Sigmoid colon (tissue), 7 donors: ENCODE measurements at regions of chr19 and their contacts with region 1.

Region 1: GRCh38 chr19:10251792-10252694 is at the start of gene MRPL4:
- DNase-seq: peak; percentile 98
- H3K4me3 ChIP-seq: peak within 1 kb of the TSS; percentile 83 to 91 (median 85)
- H3K27ac ChIP-seq: peak within 1 kb of the TSS; percentile 82 to 92 (median 87)
- H3K4me1 ChIP-seq: peaks cover 0 to 27% (median 17%) of the 10 kb centered on the region in 4 donors
- H3K27me3 ChIP-seq: no peaks in the 10 kb centered on the region
- CTCF ChIP-seq: no peak
- EP300 ChIP-seq: no peak
- POLR2A ChIP-seq: peak in 1 of 2 donors; percentile 48
- total RNA-seq, gene MRPL4: 37.9 to 68.9 (median 62.8) TPM

Region 2: DNA sequence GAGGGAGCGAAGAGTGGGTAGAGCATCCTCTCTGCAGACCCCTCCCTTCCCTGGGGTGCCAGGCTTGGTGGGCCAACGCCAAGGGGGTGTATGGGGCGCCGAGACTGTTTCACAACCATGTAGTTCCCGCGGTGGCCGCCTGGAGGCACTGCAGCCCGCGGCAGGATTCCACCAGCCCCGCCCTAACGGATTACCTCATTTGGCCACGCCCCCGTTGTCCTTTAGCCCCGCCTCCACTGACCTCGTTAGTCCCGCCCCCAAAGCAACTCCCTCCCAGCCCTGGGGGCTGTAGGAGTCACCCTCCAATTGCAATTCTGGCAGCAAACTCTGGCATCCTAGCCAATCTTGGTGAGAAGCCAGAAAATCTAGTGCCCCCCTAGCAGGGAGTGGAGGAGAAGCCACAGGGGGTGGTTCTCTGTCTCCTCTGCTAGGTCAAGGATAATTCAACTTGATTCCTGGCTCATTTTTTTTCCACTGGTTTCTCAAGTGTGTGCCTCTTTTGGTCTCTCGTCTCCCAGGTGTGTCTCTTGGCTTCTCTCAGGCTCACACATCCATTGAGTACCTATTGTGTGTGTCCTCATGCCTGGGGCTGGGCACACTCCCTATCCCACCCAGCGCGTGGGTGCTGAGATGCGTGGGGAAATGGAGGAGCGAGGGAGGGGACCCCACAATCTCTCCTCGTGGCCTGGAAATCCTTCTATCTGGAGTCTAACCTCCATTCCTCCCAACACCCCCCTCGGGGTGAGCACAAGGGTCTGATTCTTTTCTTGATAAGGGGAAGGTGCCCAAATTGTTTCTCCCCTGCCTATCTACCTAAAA is 317.7 kb before region 1 on chr19:
- intact Hi-C with region 1: loop called (anchors 2 kb)
- DNase-seq: peak; percentile 80
- H3K4me3 ChIP-seq: no peak overlapping the region
- H3K27ac ChIP-seq: no peak overlapping the region
- H3K4me1 ChIP-seq: peaks cover 0 to 36% (median 20%) of the 10 kb centered on the region in 4 donors
- H3K27me3 ChIP-seq: peaks cover 29 to 63% (median 42%) of the 10 kb centered on the region in 3 donors
- CTCF ChIP-seq: peak; percentile 69 to 80 (median 73)
- EP300 ChIP-seq: no peak
- POLR2A ChIP-seq: no peak

Region 3: DNA sequence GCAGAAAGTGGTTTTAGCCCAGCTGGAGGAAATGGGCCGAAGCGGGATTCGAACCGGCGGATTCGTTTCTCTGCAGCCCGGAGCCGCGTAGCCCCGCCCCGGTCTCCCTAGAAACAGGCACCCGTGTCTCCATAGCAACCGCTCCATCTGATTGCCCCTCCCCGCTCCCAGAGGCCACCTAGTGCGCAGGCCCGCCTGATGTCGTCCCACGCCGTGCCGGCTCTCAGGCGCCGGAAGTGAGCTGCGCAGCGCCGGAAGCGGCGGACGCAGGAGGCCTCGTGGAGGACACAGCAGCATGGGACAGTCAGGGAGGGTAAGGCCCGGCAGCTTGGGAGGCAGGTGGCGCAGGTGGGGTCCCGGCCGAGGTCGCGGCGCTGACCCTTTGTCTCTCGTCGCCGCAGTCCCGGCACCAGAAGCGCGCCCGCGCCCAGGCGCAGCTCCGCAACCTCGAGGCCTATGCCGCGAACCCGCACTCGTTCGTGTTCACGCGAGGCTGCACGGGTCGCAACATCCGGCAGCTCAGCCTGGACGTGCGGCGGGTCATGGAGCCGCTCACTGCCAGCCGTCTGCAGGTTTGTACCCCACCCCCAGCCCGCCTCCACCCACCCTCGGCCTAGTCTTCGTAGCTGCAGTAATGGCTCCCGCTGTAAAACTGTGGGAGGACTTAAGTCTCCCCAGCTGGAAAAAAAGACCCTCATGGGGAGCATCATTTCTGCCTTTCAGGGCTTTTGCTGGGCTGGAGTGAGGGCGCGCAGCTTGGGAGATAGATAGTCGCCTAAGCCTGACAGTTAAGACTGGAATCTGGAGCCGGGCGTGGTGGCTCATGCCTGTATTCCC is 145.7 kb before region 1 on chr19 and contains the start of gene PPAN:
- intact Hi-C with region 1: loop called (anchors 5 kb)
- DNase-seq: peak; percentile 99
- H3K4me3 ChIP-seq: peak within 1 kb of the TSS; percentile 59 to 96 (median 72)
- H3K27ac ChIP-seq: peak within 1 kb of the TSS; percentile 71 to 87 (median 77)
- H3K4me1 ChIP-seq: peaks cover 0 to 19% (median 13%) of the 10 kb centered on the region in 4 donors
- H3K27me3 ChIP-seq: no peaks in the 10 kb centered on the region
- CTCF ChIP-seq: no peak
- EP300 ChIP-seq: peak in 1 of 4 donors; percentile 54
- POLR2A ChIP-seq: peak in 1 of 2 donors; percentile 23
- total RNA-seq, gene PPAN: 24.6 to 29.1 (median 25.8) TPM

Region 4: GRCh38 chr19:10194500-10195289 is 57.3 kb before region 1 on chr19 and contains the start of gene DNMT1:
- intact Hi-C with region 1: loop called (anchors 1 kb)
- DNase-seq: peak; percentile 98
- H3K4me3 ChIP-seq: peak within 1 kb of the TSS; percentile 63 to 92 (median 66)
- H3K27ac ChIP-seq: peak within 1 kb of the TSS; percentile 85 to 97 (median 88)
- H3K4me1 ChIP-seq: peaks cover 5 to 19% (median 18%) of the 10 kb centered on the region in 4 donors
- H3K27me3 ChIP-seq: no peaks in the 10 kb centered on the region
- CTCF ChIP-seq: no peak
- EP300 ChIP-seq: no peak
- POLR2A ChIP-seq: peak; percentile 54 to 56
- total RNA-seq, gene DNMT1: 22.1 to 47.6 (median 34.9) TPM

Region 5: DNA sequence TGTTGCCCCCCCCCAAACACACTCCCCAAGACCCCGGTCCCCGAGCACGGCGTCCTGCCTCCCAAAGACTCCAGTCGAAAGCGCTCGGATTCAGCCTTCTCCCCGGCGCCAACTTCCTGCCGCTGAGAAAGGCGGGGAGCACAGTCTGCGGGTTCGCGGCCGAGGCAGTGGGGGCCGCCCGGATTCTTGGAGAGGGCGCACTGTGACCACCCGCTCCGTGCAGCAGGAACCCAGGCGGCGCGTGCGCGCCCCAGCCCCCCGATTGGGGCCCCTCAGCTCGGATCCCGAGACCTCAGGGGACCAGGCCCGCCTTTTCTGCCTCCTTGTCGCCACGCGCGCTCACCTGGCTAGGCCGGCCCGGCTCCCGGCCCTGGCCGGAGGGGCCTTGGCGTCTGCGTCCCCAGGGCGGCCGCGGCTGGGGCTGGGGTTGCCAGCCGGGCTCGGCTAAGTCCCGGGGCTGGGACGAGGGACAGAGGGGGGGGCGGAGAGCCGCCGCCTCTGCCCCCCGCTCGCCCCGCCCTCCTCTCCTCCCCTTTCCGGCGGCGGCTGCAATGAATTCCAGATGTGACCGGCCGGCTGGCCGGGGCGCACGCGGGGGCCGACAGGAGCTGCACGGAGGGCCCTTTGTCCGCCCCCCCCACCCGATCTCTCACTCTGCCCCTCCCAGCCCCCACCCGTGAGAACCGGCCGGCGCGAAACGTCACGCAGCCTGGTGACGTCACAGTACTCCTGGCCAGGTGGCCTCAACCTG is 21.0 kb before region 1 on chr19 and contains the start of gene S1PR2:
- intact Hi-C with region 1: loop called (anchors 2 kb)
- DNase-seq: peak; percentile 92
- H3K4me3 ChIP-seq: peak within 1 kb of the TSS; percentile 66 to 99 (median 93)
- H3K27ac ChIP-seq: peak within 1 kb of the TSS; percentile 82 to 89 (median 88)
- H3K4me1 ChIP-seq: peaks cover 2 to 35% (median 19%) of the 10 kb centered on the region in 4 donors
- H3K27me3 ChIP-seq: no peaks in the 10 kb centered on the region
- CTCF ChIP-seq: no peak
- EP300 ChIP-seq: no peak
- POLR2A ChIP-seq: peak; percentile 21 to 32
- total RNA-seq, gene S1PR2: 7.1 to 13.0 (median 10.6) TPM

Region 6: GRCh38 chr19:10380313-10381102 is 128.5 kb after region 1 on chr19 and contains the start of gene TYK2:
- intact Hi-C with region 1: loop called (anchors 5 kb)
- DNase-seq: peak; percentile 98
- H3K4me3 ChIP-seq: peak within 1 kb of the TSS; percentile 67 to 97 (median 88)
- H3K27ac ChIP-seq: peak within 1 kb of the TSS; percentile 79 to 87 (median 86)
- H3K4me1 ChIP-seq: peaks cover 0 to 14% (median 12%) of the 10 kb centered on the region in 4 donors
- H3K27me3 ChIP-seq: no peaks in the 10 kb centered on the region
- CTCF ChIP-seq: no peak
- EP300 ChIP-seq: no peak
- POLR2A ChIP-seq: peak; percentile 51 to 54
- total RNA-seq, gene TYK2: 36.7 to 125 (median 50.3) TPM